ENCODE measurements at regions of chr11 and their contacts with region 1.

Region 1: DNA sequence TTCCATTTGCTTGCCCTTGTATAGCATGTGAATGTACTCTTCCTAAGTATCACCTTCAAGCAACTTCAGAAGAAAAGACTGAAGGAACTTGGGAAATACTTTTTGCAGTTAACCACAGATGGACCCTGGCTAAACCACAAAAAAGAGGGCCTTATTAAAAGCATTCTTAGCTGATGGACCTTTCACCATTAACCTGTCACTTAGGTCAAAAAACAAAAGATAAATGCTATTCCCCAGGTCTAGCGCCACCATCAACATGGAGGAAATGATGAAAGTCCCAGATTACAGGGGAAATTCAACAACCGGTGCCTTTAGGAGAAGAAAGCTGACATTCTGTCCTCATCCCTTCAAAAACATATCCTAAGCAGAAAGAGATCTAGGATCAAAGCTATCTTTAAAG is 29.5 kb downstream of the STK33 start:
- DNase-seq: no peak
- ATAC-seq: no peak
- H3K4me3 ChIP-seq: no peak overlapping the region
- H3K27ac ChIP-seq: no peak overlapping the region
- H3K4me1 ChIP-seq: no peaks in the 10 kb centered on the region
- H3K27me3 ChIP-seq: no peaks in the 10 kb centered on the region
- CTCF ChIP-seq: no peak
- POLR2A ChIP-seq: no peak

Region 2: GRCh38 chr11:8219257-8220021 is 345.1 kb before region 1 on chr11:
- intact Hi-C with region 1: loop called (anchors 5 kb)
- DNase-seq: peak; percentile 62 to 75 (median 68)
- ATAC-seq: peak; percentile 84
- H3K4me3 ChIP-seq: no peak overlapping the region
- H3K27ac ChIP-seq: no peak overlapping the region
- H3K4me1 ChIP-seq: no peaks in the 10 kb centered on the region
- H3K27me3 ChIP-seq: no peaks in the 10 kb centered on the region
- CTCF ChIP-seq: peak; percentile 48 to 65 (median 61)
- POLR2A ChIP-seq: no peak

Measured in body of pancreas (tissue), 4 donors.